ENCODE measurements at regions of chr10 and their contacts with region 1.

Region 1: GRCh38 chr10:86671985-86672710 is 3.8 kb downstream of the LDB3 start:
- DNase-seq: no peak
- H3K4me3 ChIP-seq: no peak overlapping the region
- H3K27ac ChIP-seq: peak overlapping the region in 1 of 2 donors; percentile 26
- H3K4me1 ChIP-seq: no peaks in the 10 kb centered on the region
- H3K27me3 ChIP-seq: no peaks in the 10 kb centered on the region
- CTCF ChIP-seq: no peak
- POLR2A ChIP-seq: no peak

Region 2: GRCh38 chr10:85250304-85250703 is 1421.8 kb before region 1 on chr10:
- intact Hi-C with region 1: loop called (anchors 5 kb)
- DNase-seq: no peak
- H3K4me3 ChIP-seq: no peak overlapping the region
- H3K27ac ChIP-seq: no peak overlapping the region
- H3K4me1 ChIP-seq: no peaks in the 10 kb centered on the region
- H3K27me3 ChIP-seq: no peaks in the 10 kb centered on the region
- CTCF ChIP-seq: no peak
- POLR2A ChIP-seq: no peak